CD8-positive, alpha-beta T cell (primary cell): ENCODE measurements at regions of chr11 and their contacts with region 1.

Region 1: GRCh38 chr11:66059966-66060680 is 8.0 kb downstream of the SF3B2 start:
- DNase-seq: no peak
- ATAC-seq: no peak
- H3K4me3 ChIP-seq: no peak overlapping the region
- H3K4me3 Mint-ChIP-seq: no peak overlapping the region
- H3K27ac ChIP-seq: no peak overlapping the region
- H3K27ac Mint-ChIP-seq: peak overlapping the region; percentile 11
- H3K4me1 ChIP-seq: no peaks in the 10 kb centered on the region
- H3K4me1 Mint-ChIP-seq: peaks cover 19% of the 10 kb centered on the region
- H3K27me3 ChIP-seq: no peaks in the 10 kb centered on the region
- H3K27me3 Mint-ChIP-seq: no peaks in the 10 kb centered on the region
- CTCF ChIP-seq: no peak

Region 2: GRCh38 chr11:66045177-66045639 is 14.9 kb before region 1 on chr11:
- CTCF ChIA-PET with region 1: interaction called, 31 read pairs
- POLR2A ChIA-PET with region 1: interaction called, 5 read pairs
- intact Hi-C with region 1: no loop called
- DNase-seq: peak; percentile 60 to 90 (median 87)
- ATAC-seq: peak; percentile 98
- H3K4me3 ChIP-seq: no peak overlapping the region
- H3K4me3 Mint-ChIP-seq: no peak overlapping the region
- H3K27ac ChIP-seq: no peak overlapping the region
- H3K27ac Mint-ChIP-seq: no peak overlapping the region
- H3K4me1 ChIP-seq: peaks cover 13% of the 10 kb centered on the region
- H3K4me1 Mint-ChIP-seq: peaks cover 12% of the 10 kb centered on the region
- H3K27me3 ChIP-seq: no peaks in the 10 kb centered on the region
- H3K27me3 Mint-ChIP-seq: no peaks in the 10 kb centered on the region
- CTCF ChIP-seq: peak; percentile 83